Posterior cingulate gyrus (tissue), 11 donors: ENCODE measurements at regions of chr17 and their contacts with region 1.

Region 1: GRCh38 chr17:7296189-7296902 is 1.9 kb upstream of the YBX2 start:
- DNase-seq: peak; percentile 66 to 97 (median 78)

Region 2: DNA sequence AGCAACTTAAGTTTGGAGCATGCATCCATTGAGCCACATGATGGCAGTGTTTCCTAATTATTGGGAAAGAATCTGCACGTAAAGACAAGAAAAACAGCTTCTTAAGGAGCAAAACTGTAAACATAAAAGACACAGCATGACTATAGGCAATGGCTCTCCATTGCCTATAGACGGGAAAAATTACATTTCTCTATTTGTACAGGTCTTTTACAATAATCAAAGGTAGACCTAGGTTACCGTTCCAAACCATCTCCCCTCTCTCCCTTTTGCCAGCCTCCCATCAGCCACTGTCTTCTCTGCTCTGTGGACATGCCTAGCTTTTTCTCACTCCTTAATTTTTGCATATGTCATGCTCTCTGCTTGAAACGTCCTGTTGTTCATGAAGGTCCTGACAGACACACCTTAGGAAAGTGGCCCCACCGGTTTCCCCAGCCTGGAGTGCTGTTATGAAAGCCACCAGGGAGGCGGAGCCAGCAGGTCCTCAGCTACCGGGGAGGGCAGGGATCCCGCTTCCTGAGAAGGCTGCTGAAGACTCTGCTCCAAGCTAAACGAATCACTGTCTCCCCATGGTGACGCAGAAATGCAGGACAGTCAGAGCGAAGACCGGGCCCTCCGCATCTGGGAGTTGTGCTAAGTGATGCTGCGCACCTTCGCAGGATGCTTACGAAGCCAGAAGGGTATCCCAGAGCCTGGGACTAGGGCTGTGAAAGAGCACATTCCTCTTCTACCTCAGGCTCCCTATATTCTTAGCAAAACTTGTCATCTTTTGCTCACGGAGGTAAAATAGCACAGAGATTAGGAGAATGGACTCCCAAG is 250.2 kb before region 1 on chr17:
- intact Hi-C with region 1: loop called (anchors 5 kb)
- DNase-seq: peak in 8 of 10 donors; percentile 45 to 95 (median 70)

Region 3: DNA sequence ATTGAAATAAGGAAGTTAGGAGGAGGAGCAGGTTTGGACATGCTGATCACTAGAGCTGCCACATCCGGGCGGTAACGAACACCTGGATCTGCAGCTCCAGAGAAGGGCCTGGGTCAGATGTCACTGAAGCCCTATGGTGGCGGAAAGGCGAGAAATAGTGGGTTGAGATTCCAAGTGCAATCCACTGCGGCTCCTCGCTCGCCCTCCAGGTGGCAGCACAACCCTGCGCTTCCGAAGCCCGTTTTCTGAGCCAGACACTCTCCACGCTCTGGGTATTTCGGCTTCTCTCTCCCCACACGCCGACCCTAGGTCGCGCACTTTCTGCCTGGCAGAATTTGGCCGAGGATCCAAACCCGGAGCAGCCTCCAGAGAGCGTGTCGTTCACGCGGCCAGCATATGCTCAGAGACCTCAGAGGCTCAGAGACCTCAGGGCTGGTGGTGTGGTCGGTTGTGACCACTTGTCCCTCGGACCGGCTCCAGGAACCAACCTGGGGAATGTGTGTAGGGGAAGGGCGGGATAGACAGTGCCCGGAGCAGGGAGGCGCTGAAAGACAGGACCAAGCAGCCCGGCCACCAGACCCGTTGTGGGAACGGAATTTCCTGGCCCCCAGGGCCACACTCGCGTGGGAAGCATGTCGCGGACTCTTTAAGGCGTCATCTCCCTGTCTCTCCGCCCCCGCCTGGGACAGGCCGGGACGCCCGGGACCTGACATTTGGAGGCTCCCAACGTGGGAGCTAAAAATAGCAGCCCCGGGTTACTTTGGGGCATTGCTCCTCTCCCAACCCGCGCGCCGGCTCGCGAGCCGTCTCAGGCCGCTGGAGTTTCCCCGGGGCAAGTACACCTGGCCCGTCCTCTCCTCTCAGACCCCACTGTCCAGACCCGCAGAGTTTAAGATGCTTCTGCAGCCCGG is 15.6 kb before region 1 on chr17:
- intact Hi-C with region 1: loop called (anchors 1 kb)
- DNase-seq: peak; percentile 61 to 97 (median 80)

Region 4: DNA sequence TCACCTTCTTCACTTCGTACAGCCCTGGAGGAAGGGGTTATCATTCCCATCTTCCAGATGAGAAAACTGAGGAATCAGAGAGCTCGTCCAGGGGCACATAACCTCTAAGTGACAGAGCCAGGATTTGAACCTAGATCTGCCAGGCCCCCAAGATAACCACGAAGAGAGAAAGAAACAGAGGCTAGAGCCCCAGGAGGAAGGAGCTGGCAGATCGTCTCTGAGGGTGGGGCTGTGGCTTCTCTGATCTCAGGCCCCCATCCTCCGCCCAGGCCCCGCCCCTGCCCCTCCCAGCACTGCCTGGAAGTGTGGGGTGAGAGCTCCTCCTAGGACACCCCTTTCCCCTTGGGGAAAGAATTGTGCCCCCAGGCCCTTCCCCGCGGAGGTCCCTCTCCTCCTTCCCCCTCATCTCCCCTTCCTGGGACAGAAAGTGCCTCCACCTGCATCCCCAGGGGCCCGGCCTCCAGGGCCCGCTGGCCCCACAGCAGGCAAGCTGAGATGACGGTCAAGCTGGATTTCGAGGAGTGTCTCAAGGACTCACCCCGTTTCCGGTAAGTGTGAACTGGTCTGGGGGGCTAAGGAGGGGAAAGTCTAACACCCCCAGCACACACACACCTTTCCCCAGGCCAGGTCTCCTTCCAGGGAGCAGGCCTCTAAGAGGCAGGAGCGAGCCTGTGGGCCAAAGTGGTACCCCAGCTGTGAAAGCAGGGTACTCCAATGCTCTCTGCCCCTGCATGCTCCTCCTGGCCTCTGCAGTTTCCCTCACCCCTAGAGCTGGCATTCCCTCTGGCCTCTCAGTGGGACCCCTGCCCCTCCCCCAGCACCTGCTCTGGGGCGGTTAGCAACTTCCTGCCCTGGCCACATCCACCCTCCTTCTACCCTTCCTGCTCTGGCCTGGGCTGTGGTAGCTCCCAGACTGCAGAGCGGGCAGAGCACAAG is 40.2 kb after region 1 on chr17 and contains the start of gene ACAP1:
- intact Hi-C with region 1: no loop called
- DNase-seq: no peak

Region 5: DNA sequence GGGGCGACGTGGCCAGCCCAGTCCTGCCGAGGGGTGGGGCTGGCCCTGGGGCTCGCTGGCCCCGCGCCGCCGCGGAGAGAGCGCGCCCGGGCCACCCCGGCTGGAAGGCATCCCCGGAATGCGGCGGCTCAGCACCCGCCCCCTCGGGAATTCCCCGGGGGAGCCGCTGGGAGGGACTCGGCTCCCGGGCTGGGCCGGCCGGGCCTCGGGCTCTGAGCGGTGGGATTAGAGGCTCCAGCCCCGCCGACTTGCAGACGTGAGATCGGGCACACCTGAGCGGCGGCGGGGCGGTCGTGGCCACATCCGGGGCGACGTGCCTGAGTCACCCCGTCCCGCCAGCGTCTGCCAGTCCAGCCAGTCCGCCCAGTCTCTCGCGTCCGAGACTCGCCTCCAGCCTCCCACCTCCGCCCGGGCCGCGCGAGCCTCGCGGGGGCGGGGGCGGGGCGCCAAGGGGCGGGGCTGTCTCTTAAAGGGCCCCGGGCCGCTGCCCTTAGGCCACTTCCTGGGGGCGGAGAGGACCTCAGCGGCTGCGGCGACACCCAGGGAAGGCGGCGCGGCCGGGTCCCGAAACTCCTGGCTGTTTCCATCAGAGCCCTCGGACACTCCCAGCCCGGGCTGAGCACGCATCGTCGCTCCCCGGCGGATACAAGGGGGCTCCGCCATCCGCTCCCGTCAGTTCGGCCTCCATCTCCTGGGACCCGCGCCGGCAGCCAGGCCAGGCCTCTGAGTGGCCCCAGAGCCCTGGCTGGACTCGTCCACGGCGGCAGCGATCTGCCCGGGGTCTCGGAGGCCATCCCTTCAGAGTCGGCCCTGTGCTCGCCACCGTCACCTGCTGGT is 55.5 kb after region 1 on chr17 and contains the start of gene KCTD11:
- intact Hi-C with region 1: no loop called
- DNase-seq: peak; percentile 73 to 97 (median 80)